Breast epithelium (tissue), 4 donors: ENCODE measurements at regions of chr17 and their contacts with region 1.

Region 1: DNA sequence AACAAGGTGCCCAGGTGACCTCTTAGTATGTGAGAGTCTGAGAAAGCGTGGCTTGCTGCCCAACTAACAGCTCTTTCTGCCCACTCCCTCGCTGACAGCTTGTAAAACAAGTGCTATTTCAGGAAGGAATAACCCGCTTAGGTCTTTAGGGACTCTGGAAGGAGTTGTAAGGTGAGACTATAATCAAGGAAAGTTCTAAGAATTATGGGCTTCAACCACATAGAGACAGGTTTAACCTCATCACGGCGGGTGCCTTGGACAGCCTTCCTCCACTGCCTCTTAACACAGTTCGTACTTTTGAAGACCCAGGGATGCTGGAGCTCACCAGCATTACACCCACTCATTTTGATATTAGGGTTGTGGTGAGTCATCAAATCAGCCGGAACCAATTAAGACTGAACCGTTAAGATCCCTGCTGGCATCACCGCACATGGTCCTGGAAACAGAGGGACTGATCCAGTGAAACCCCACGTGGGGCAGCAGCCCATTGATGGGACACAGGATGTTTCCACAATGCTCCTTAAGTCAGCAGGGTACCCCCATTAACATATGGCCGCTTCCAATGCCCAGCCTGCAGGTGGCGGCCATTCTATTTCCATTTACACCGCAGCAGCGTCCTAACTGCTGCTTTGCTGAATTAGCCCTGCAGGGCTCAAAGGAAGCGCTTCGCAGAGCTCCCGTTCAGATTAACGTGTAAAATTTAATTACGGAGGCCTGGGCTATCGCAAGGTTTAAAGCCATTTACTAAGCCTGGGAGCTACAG is 176.6 kb upstream of the SDK2 start:
- DNase-seq: no peak
- H3K4me3 ChIP-seq: no peak overlapping the region
- H3K27ac ChIP-seq: no peak overlapping the region
- H3K4me1 ChIP-seq: no peaks in the 10 kb centered on the region
- H3K27me3 ChIP-seq: no peaks in the 10 kb centered on the region
- CTCF ChIP-seq: no peak
- POLR2A ChIP-seq: no peak

Region 2: GRCh38 chr17:73639932-73640331 is 180.9 kb before region 1 on chr17:
- intact Hi-C with region 1: loop called (anchors 5 kb)
- DNase-seq: no peak
- H3K4me3 ChIP-seq: no peak overlapping the region
- H3K27ac ChIP-seq: no peak overlapping the region
- H3K4me1 ChIP-seq: peaks cover 5 to 12% of the 10 kb centered on the region in 2 donors
- H3K27me3 ChIP-seq: peaks cover 0 to 33% of the 10 kb centered on the region in 2 donors
- CTCF ChIP-seq: no peak
- POLR2A ChIP-seq: no peak